Dendritic cell treated with granulocyte-macrophage colony-stimulating factor and Interleukin-4, amounts not matched to agents 40 ng/mL and 50 ng/mL, for 4 days (primary cell): ENCODE measurements at regions of chr2 and their contacts with region 1.

Region 1: DNA sequence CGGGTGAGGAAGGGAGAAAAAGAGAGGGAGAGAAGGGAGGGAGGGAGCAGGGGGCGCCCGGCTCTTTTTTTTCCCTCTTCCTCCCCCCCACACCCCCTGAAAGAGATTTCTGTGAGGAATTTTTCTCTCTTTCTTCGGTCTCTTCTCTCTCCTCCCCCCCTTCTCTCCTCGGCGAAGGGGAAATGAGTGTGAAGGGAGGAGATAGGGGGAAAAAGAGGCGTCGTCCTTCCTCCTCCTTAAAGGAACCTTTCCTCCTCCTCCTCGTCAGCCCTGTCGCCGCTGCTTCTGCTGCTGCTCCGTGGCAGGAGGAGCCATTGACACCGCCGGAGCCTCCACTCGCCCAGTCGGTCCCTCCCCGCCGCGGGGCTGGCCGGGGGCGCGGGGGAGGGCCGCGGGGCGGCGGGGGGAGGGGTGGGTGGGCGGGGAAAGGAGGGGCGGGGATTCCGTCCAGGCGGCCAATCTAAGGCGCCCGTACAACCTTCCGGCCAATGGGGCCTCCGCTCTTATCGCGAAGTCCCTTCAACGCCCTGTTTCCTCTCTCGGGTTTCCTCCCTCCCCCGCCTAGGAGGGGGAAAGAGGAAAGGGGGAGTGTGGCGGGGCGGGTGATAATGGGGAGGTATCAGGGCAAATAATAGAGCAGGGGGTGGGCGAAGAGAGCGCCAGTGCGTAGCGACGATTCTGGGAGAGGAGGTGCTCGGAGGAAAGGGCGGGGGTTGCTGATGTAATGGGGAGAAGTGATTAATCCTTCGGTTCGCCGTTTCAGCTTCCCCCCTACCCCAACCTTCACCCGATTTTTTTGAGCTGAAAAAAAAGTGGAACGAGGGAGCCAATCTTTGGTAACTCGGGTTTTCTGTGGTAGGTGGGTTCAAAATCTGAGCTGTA is at the start of gene FBXO11:
- H3K4me3 Mint-ChIP-seq: peak within 1 kb of the TSS; percentile 97
- H3K27ac Mint-ChIP-seq: peak within 1 kb of the TSS; percentile 96
- H3K4me1 Mint-ChIP-seq: peaks cover 16% of the 10 kb centered on the region
- H3K27me3 Mint-ChIP-seq: no peaks in the 10 kb centered on the region

Region 2: DNA sequence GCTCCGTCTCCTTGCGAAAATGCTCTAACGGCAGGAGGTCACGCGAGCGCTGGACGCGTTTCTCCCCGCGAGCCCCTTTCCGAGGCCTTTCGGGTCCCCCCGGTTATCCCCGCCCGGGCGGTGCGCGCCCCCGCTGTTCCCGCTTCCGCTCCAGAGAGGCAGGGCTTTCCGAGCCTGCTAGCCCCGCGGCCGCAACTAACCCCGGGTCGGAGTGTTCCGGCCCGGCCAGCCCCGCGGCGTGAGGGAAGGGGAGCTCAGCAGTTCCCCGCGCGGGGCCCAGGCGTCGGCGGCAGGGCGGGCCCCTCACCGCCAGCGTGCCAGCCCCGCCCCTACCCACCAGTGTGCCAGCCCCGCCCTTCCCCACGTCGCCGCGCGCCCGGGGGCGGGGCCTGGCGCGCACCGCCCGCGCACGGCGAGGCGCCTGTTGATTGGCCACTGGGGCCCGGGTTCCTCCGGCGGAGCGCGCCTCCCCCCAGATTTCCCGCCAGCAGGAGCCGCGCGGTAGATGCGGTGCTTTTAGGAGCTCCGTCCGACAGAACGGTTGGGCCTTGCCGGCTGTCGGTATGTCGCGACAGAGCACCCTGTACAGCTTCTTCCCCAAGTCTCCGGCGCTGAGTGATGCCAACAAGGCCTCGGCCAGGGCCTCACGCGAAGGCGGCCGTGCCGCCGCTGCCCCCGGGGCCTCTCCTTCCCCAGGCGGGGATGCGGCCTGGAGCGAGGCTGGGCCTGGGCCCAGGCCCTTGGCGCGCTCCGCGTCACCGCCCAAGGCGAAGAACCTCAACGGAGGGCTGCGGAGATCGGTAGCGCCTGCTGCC is 123.5 kb before region 1 on chr2 and contains the start of gene MSH6:
- intact Hi-C with region 1: loop called (anchors 10 kb)
- H3K4me3 Mint-ChIP-seq: peak within 1 kb of the TSS; percentile 93
- H3K27ac Mint-ChIP-seq: peak within 1 kb of the TSS; percentile 89
- H3K4me1 Mint-ChIP-seq: peaks cover 36% of the 10 kb centered on the region
- H3K27me3 Mint-ChIP-seq: no peaks in the 10 kb centered on the region

Region 3: GRCh38 chr2:48050711-48051110 is 144.3 kb after region 1 on chr2:
- intact Hi-C with region 1: no loop called
- H3K4me3 Mint-ChIP-seq: no peak overlapping the region
- H3K27ac Mint-ChIP-seq: no peak overlapping the region
- H3K4me1 Mint-ChIP-seq: peaks cover 5% of the 10 kb centered on the region
- H3K27me3 Mint-ChIP-seq: peaks cover 4% of the 10 kb centered on the region

Region 4: DNA sequence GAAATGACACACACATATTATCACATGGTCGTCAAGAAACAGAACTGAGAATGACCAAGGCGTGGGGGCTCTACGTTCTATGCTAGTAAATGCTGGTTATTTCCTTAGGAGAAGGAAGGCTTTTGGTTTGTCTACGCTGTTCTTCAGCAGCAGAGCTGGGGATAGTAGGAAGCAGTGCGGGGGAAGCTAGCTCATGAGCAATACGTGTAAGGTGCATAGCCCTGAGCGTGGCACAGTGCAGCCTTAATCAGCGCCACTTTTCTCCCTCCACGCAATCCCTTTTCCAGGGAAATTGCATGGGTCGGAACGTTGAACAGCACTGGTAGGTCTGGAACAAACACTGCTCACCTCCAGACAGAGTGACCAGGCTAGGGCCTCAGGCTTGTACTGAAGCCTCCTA is 199.4 kb after region 1 on chr2:
- intact Hi-C with region 1: loop called (anchors 1 kb)
- H3K4me3 Mint-ChIP-seq: no peak overlapping the region
- H3K27ac Mint-ChIP-seq: peak overlapping the region; percentile 53
- H3K4me1 Mint-ChIP-seq: peaks cover 23% of the 10 kb centered on the region
- H3K27me3 Mint-ChIP-seq: no peaks in the 10 kb centered on the region

Region 5: GRCh38 chr2:48343571-48344440 is 437.4 kb after region 1 on chr2:
- intact Hi-C with region 1: loop called (anchors 10 kb)
- H3K4me3 Mint-ChIP-seq: peak overlapping the region; percentile 66
- H3K27ac Mint-ChIP-seq: peak overlapping the region; percentile 83
- H3K4me1 Mint-ChIP-seq: peaks cover 11% of the 10 kb centered on the region
- H3K27me3 Mint-ChIP-seq: no peaks in the 10 kb centered on the region